Activated CD8-positive, alpha-beta memory T cell treated with anti-CD3 and anti-CD28 coated beads, Interleukin-2, amount 10 ng/mL, durations not matched to agents 7 days and 5 days (primary cell): ENCODE measurements at regions of chr19 and their contacts with region 1.

Region 1: GRCh38 chr19:29873024-29873800 is 61.4 kb downstream of the CCNE1 start:
- DNase-seq: peak; percentile 72
- ATAC-seq: peak; percentile 93
- H3K4me3 Mint-ChIP-seq: peak overlapping the region; percentile 50
- H3K27ac Mint-ChIP-seq: no peak overlapping the region
- H3K4me1 Mint-ChIP-seq: peaks cover 16% of the 10 kb centered on the region
- H3K27me3 Mint-ChIP-seq: peaks cover 35% of the 10 kb centered on the region

Region 2: GRCh38 chr19:29724102-29724641 is 149.0 kb before region 1 on chr19:
- CTCF ChIA-PET with region 1: interaction called, 76 read pairs
- DNase-seq: peak; percentile 55
- ATAC-seq: peak; percentile 77
- H3K4me3 Mint-ChIP-seq: peak overlapping the region; percentile 36
- H3K27ac Mint-ChIP-seq: peak overlapping the region; percentile 36
- H3K4me1 Mint-ChIP-seq: peaks cover 13% of the 10 kb centered on the region
- H3K27me3 Mint-ChIP-seq: peaks cover 50% of the 10 kb centered on the region

Region 3: DNA sequence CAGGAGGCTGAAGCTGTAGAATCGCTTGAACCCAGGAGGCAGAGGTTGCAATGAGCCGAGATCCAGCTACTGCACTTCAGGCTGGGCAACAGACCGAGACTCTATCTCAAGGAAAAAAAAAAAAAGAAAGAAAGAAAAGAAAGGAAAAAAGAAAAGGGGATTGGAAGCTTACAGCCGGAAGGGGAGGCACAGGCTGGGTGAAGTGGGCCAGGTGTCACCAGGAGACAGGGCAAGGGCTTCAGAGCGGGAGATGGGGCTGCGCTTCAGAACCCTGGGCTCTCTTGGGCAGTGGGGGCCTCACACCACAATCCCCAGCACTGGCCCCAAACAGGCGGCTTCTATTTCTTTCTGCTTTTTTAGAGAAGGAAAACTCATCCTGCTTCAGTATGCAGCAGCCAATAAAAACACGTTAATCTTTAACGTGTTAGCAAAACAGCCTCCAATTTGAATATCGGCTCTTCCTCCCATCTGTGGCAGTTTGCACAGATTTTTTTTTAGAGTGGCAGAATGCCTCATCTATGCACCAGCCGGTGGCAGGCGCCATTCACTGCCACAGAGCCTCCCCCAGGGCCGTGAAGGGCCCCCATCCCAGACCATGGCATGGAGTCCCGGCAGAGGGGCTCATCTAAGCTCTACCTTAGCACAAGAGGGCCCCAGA is 111.5 kb before region 1 on chr19:
- CTCF ChIA-PET with region 1: interaction called, 92 read pairs
- DNase-seq: no peak
- ATAC-seq: no peak
- H3K4me3 Mint-ChIP-seq: no peak overlapping the region
- H3K27ac Mint-ChIP-seq: no peak overlapping the region
- H3K4me1 Mint-ChIP-seq: peaks cover 2% of the 10 kb centered on the region
- H3K27me3 Mint-ChIP-seq: peaks cover 13% of the 10 kb centered on the region

Region 4: DNA sequence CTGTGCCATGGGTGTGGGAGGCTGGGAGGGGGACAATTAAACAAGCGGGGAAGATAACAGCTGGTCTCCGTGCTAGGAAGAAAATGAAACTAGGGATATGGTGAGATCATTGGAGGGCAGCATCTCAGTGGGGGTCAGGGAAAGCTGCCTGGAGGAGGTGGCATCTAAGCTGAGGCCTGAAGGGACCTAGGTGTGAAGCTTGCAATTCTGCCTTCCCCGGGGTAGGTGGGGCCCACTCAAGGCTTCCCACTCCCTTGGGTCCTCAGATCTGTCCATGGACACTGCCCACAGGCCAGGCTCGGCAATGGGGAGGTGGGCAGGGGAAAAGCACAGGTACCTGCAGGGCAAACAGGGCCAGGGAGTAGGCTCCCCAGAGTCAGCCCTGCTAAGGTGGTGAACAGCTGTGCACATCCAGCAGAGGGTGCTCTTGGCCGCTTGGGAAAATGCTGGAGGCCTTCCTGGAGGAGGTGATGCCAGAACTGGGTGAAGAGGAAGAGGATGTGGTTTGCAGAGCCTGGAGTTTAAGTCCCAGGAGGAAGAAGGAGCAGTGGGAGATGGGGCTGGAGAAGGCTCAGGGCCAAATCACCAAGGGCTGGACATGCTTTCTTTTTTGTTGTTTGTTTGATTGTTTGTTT is 87.1 kb before region 1 on chr19:
- CTCF ChIA-PET with region 1: interaction called, 12 read pairs
- DNase-seq: no peak
- ATAC-seq: no peak
- H3K4me3 Mint-ChIP-seq: no peak overlapping the region
- H3K27ac Mint-ChIP-seq: no peak overlapping the region
- H3K4me1 Mint-ChIP-seq: peaks cover 3% of the 10 kb centered on the region
- H3K27me3 Mint-ChIP-seq: peaks cover 4% of the 10 kb centered on the region

Region 5: DNA sequence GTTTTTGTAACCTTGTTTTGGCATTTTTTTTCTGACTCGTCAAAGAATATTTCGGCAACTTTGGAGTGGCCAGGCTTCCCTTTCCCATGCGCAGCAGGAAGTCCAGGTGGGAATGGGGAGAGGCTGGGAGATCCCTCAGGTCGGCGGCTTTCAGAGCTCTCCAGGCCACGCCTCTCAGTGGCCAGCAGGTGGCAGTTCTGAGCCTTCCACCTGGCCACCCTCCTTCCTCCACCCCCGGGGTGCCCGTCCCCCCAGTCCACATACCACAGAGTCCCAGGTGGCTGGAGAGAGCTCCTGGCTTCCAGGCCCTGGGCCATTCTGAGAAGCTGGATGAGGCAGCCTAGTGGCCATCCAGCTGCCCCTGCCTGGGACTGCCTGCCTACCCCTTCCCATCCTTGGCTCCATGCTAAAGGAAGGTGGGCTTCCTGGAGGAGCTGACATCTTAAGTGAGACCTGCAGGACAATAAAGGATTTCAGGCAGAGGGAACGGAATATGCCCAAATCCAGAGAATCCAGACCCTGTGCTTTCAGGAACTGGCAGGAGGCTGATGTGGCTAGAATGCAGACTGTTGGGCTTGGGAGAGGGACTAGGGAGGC is 15.1 kb before region 1 on chr19:
- CTCF ChIA-PET with region 1: interaction called, 33 read pairs
- DNase-seq: peak; percentile 62
- ATAC-seq: peak; percentile 78
- H3K4me3 Mint-ChIP-seq: no peak overlapping the region
- H3K27ac Mint-ChIP-seq: no peak overlapping the region
- H3K4me1 Mint-ChIP-seq: no peaks in the 10 kb centered on the region
- H3K27me3 Mint-ChIP-seq: peaks cover 10% of the 10 kb centered on the region

Region 6: DNA sequence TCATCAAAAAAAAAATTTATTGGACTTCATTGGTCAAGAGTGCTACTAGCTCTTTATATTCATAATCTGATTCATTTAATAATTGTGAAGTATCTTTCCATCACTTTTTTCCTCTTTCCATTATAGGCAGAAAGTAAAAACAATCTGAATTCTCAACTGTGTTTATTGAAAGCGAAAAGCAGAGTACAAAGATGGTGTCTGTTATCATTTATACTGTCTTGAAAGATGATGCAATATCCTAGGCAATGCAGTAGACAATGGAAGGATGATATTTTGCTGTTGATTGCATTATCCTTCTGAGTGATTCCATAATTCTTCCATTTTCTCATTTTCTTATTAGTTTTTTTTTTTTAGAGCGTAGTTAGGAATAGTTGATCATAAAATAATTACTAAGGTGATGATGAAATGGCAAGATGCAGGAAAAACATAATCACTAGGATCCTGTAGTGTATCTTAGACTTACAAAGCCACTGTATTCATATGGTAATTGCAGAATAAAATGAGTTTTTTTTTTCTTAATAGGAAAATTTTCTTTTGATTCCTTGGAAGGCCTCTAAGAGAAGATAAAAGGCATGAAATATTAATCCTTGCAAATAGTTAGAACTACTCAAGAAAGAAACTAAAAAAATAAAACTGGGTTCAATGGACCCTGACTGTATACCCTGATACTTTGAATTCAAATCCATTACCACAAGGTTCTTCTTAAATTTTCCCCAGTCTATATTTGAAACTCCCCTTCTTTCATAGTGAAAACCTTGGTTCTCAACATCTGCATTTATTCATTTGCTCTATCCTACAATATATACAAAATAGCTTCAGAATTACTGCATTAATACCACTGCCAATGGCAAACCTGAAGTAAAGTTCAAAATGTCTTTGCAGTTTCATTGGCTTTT is 80.4 kb after region 1 on chr19:
- CTCF ChIA-PET with region 1: no interaction called
- DNase-seq: no peak
- ATAC-seq: no peak
- H3K4me3 Mint-ChIP-seq: no peak overlapping the region
- H3K27ac Mint-ChIP-seq: no peak overlapping the region
- H3K4me1 Mint-ChIP-seq: peaks cover 31% of the 10 kb centered on the region
- H3K27me3 Mint-ChIP-seq: no peaks in the 10 kb centered on the region